Pancreas (tissue), 10 donors: ENCODE measurements at regions of chr1 and their contacts with region 1.

Region 1: DNA sequence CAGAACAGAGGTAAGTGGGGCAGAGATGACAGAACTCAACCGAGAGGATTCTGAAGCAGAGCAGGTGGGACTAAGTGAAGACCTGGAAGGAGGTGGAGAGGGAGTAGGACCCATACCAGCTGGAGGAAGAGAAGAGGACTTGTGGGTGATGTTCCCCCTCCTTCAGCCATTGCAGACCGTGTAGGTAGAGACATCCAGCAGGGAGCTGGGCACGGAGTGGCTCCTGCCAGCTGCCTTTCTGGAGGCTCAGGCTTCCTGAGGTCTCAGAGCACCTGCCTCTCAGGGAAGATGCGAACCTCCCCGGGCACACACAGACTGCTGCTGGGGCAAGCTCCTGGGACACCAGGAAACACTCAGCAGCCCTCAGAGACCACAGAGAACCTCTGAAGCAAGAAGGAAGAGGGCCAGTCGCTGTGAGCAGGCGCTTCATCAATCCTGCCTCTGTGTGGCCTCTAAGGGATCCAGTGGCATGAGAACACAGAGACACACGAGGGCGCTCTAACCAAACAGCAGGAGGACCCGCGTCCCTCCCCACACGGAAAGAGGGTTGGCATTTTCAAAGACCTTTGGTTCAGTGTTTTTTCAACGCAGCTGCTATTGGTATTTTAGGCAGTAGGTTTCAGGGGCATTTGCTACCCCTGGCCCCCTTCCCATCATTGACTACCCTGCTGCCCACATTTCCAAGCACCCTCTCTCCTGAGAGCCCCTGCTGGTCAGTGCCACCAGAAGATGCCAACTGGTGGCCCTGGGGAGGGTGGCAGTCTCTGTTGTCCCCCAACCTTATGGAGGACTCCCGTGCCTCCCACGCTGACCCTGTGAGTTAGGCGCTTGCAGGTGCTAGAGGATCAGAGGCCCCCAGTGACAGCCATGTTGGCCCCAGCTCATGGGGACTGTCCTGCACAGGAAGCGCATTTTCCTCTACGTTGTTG is 89.6 kb upstream of the EDN2 start:
- DNase-seq: peak; percentile 65 to 86 (median 78)
- ATAC-seq: peak; percentile 89 to 99 (median 96)
- H3K4me3 ChIP-seq: no peak overlapping the region
- H3K27ac ChIP-seq: no peak overlapping the region
- H3K4me1 ChIP-seq: no peaks in the 10 kb centered on the region
- H3K27me3 ChIP-seq: no peaks in the 10 kb centered on the region
- CTCF ChIP-seq: peak; percentile 62 to 84 (median 79)

Region 2: DNA sequence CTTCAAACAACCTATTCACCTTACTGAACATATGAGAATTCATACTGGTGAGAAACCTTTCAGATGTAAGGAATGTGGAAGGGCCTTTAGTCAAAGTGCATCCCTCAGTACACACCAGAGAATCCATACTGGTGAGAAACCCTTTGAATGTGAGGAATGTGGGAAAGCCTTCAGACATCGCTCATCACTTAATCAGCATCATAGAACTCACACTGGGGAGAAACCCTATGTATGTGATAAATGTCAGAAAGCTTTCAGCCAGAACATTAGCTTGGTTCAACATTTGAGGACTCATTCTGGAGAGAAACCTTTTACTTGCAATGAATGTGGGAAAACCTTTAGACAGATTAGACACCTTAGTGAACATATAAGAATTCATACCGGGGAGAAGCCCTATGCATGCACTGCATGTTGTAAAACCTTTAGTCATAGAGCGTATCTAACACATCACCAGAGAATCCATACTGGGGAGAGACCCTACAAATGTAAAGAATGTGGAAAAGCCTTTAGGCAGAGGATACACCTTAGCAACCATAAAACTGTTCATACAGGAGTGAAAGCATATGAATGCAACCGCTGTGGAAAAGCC is 1078.6 kb before region 1 on chr1:
- intact Hi-C with region 1: no loop called
- DNase-seq: no peak
- ATAC-seq: no peak
- H3K4me3 ChIP-seq: no peak overlapping the region
- H3K27ac ChIP-seq: no peak overlapping the region
- H3K4me1 ChIP-seq: no peaks in the 10 kb centered on the region
- H3K27me3 ChIP-seq: no peaks in the 10 kb centered on the region
- CTCF ChIP-seq: no peak

Region 3: GRCh38 chr1:41795205-41795762 is 221.2 kb after region 1 on chr1:
- intact Hi-C with region 1: loop called in 1 of 3 experiments (anchors 10 kb)
- DNase-seq: no peak
- ATAC-seq: peak in 2 of 4 donors; percentile 50 to 58
- H3K4me3 ChIP-seq: no peak overlapping the region
- H3K27ac ChIP-seq: no peak overlapping the region
- H3K4me1 ChIP-seq: no peaks in the 10 kb centered on the region
- H3K27me3 ChIP-seq: no peaks in the 10 kb centered on the region
- CTCF ChIP-seq: no peak